Heart right ventricle (tissue), 16 donors: ENCODE measurements at regions of chr20 and their contacts with region 1.

Region 1: DNA sequence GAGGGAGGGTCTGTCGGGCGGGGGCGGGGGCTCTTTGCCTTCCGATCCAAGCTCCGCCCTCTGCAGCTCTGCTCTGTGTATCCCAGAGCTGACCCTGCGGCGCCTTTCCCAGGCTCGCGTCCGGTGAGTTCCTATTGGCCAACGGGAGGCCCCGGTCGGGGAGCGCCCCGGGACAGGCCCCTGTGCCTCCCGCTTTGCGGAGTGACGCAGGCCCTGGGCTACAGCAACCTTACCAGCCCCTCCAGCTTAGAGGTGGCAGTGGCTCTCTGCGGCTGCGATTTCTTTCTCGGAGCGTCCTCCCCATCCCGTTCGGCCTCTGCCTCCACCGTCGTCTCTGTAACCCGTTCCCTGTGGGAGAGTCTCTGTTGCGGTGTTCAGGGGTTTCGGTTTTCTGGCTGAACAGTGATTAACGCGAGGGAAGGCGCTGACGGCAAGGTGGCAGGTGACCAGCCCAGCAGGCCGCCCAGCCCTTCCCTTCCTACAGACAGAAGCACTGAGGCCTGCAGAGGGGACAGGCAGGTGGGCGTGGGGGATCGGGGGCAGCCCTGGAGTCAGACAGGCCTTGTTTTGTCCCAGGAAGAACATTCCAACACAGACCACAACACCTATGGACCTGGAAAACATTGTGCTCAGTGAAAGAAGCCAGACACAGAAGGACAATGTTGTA is 18.1 kb upstream of the CEBPB start:
- DNase-seq: peak; percentile 92 to 93
- ATAC-seq: peak; percentile 95 to 98 (median 97)
- H3K4me3 ChIP-seq: peak overlapping the region; percentile 44 to 70 (median 62)
- H3K27ac ChIP-seq: peak overlapping the region; percentile 78 to 97 (median 90)
- H3K4me1 ChIP-seq: peaks cover 0 to 43% (median 18%) of the 10 kb centered on the region in 9 donors
- H3K27me3 ChIP-seq: no peaks in the 10 kb centered on the region
- CTCF ChIP-seq: no peak

Region 2: GRCh38 chr20:49990271-49990720 is 182.2 kb before region 1 on chr20:
- intact Hi-C with region 1: no loop called
- DNase-seq: no peak
- ATAC-seq: peak in 1 of 8 donors; percentile 8
- H3K4me3 ChIP-seq: no peak overlapping the region
- H3K27ac ChIP-seq: peak overlapping the region in 9 of 10 donors; percentile 64 to 90 (median 78)
- H3K4me1 ChIP-seq: peaks cover 12 to 73% (median 65%) of the 10 kb centered on the region in 9 donors
- H3K27me3 ChIP-seq: no peaks in the 10 kb centered on the region
- CTCF ChIP-seq: no peak

Region 3: GRCh38 chr20:50120897-50121693 is 51.4 kb before region 1 on chr20:
- intact Hi-C with region 1: loop called (anchors 1 to 5 kb)
- DNase-seq: peak in 1 of 2 donors; percentile 58
- ATAC-seq: peak; percentile 62 to 82 (median 77)
- H3K4me3 ChIP-seq: no peak overlapping the region
- H3K27ac ChIP-seq: peak overlapping the region in 2 of 10 donors; percentile 11 to 31
- H3K4me1 ChIP-seq: peaks cover 0 to 15% (median 7%) of the 10 kb centered on the region in 9 donors
- H3K27me3 ChIP-seq: no peaks in the 10 kb centered on the region
- CTCF ChIP-seq: peak; percentile 60 to 84 (median 80)

Region 4: GRCh38 chr20:51595058-51595532 is 1422.6 kb after region 1 on chr20:
- intact Hi-C with region 1: no loop called
- DNase-seq: peak; percentile 83 to 90
- ATAC-seq: peak; percentile 93 to 99 (median 98)
- H3K4me3 ChIP-seq: no peak overlapping the region
- H3K27ac ChIP-seq: peak overlapping the region in 1 of 10 donors; percentile 20
- H3K4me1 ChIP-seq: peaks cover 0 to 15% (median 9%) of the 10 kb centered on the region in 9 donors
- H3K27me3 ChIP-seq: no peaks in the 10 kb centered on the region
- CTCF ChIP-seq: peak; percentile 71 to 93 (median 90)